Breast epithelium (tissue), 4 donors: ENCODE measurements at regions of chr20 and their contacts with region 1.

Region 1: DNA sequence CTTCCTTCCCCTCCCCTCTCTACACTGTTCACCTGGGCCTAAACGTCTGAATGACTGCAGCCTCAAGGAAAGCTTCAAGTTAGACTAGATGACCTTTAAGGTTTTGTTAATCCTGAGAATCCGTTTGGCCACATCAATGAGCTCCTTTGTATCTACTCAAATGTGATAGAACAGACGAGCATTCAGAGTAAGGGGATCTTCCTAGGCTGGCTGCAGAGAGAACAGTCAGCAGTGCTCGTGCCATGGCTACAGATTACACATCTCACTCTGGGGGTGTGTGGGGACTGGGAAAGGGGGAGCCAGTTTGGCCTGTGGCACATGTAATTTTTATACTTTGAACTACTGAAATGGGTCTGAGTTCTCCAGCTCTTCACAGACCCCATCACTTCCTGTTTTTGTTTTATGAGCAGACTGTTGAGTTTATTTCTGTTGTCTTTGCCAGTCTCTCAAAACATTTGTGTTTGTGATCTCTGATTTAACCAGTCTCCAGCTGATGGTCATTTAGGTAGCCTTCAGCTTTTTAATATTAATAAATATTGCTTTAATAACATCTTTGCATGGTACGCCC is 50.9 kb downstream of the KCNS1 start:
- DNase-seq: no peak
- H3K4me3 ChIP-seq: no peak overlapping the region
- H3K27ac ChIP-seq: no peak overlapping the region
- H3K4me1 ChIP-seq: no peaks in the 10 kb centered on the region
- H3K27me3 ChIP-seq: no peaks in the 10 kb centered on the region
- CTCF ChIP-seq: no peak
- POLR2A ChIP-seq: no peak

Region 2: GRCh38 chr20:45080867-45081624 is 31.1 kb after region 1 on chr20:
- intact Hi-C with region 1: no loop called
- DNase-seq: no peak
- H3K4me3 ChIP-seq: no peak overlapping the region
- H3K27ac ChIP-seq: no peak overlapping the region
- H3K4me1 ChIP-seq: no peaks in the 10 kb centered on the region
- H3K27me3 ChIP-seq: no peaks in the 10 kb centered on the region
- CTCF ChIP-seq: no peak
- POLR2A ChIP-seq: no peak

Region 3: DNA sequence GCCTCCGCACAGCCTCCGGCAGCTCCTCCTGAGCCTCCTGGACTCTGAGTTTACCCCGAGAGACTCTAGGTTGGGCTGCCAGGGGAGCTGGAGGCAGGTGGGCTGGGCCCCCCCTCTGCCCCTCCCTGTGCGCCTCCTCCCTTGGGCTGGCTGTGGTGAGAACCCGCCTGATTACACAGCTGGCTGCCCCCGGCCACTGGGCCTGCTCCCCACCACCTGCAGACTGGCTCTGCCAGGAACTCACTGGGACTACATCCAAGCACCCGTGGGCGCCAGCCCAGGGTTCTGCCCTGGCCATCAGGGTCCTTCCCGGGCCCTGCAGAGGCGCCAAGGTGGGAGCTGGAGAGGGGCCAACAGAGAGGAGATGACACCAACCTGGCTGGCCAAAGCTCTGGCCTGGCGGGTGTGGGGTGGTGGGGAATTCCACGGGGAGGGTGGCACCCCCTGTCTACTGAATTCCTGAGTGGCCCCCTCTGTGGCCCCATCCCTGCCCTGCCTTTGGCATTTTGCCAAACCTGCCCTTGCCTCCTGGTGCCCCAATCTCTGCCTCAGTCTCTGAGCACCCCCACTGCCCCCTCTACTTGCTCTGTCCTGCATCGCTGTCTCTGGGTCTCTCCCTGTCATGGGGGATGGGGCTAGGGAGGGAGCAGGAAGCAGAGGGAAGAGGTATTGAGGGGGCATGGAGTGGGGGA is 1280.2 kb after region 1 on chr20:
- intact Hi-C with region 1: loop called (anchors 5 kb)
- DNase-seq: no peak
- H3K4me3 ChIP-seq: no peak overlapping the region
- H3K27ac ChIP-seq: no peak overlapping the region
- H3K4me1 ChIP-seq: peaks cover 0 to 5% of the 10 kb centered on the region in 2 donors
- H3K27me3 ChIP-seq: peaks cover 0 to 13% of the 10 kb centered on the region in 2 donors
- CTCF ChIP-seq: no peak
- POLR2A ChIP-seq: no peak